Activated naive CD8-positive, alpha-beta T cell treated with anti-CD3 and anti-CD28 coated beads, Interleukin-2, amount 10 ng/mL, durations not matched to agents 7 days and 5 days (primary cell): ENCODE measurements at regions of chr3 and their contacts with region 1.

Region 1: GRCh38 chr3:51682079-51682478 is 11.0 kb downstream of the TEX264 start:
- DNase-seq: peak; percentile 59
- ATAC-seq: peak; percentile 75
- H3K4me3 Mint-ChIP-seq: peak overlapping the region; percentile 74
- H3K27ac Mint-ChIP-seq: peak overlapping the region; percentile 84
- H3K4me1 Mint-ChIP-seq: peaks cover 65% of the 10 kb centered on the region
- H3K27me3 Mint-ChIP-seq: no peaks in the 10 kb centered on the region

Region 2: DNA sequence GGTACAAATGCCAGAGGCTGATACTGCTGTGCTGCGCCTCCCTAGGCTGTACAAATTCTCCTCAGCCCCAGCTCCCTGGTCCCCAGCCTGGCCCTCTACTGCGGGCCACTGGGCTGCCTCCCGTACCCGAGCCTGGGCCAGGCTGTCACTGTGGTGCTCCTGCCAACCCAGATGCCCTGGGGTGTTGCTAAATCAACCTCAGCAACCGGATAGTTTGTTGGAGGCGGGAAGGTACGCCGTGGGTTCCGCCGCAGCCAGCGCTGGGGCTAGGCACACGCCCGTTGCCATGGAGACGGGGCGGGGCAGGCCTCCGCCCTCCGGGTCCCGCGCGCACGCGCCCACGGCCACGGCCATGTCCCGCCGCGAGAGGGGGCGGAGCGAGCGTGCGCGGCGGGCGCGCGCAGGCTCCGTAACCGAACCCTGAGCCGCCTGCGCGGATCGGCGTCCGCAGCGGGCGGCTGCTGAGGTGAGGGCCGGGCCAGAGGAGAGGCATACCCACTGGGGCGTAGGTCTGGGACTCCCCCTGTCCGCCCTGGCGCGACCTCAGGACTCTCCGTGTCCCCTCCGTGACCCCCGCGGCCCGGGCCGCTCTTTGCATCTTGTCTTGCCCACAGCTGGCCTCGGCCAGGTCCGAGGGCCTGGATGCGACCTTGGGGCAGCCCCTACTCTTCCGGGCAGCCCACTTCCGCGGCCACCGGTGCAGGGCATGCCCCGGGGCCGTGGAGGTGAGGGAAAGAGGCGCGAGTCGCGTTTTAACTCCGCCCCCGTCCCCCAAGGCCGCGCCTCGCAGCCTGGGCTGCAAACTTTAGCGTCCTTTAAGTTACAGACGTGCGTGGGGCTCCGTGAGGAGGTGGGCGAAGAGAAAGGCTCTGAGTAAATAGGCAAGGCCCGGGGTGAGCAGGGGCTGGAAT is 11.0 kb before region 1 on chr3 and contains the start of gene TEX264:
- POLR2A ChIA-PET with region 1: interaction called, 80 read pairs
- DNase-seq: peak; percentile 98
- ATAC-seq: peak; percentile 78
- H3K4me3 Mint-ChIP-seq: peak within 1 kb of the TSS; percentile 90
- H3K27ac Mint-ChIP-seq: peak within 1 kb of the TSS; percentile 90
- H3K4me1 Mint-ChIP-seq: peaks cover 55% of the 10 kb centered on the region
- H3K27me3 Mint-ChIP-seq: no peaks in the 10 kb centered on the region
- total RNA-seq, gene TEX264: 49.3 to 49.8 TPM

Region 3: DNA sequence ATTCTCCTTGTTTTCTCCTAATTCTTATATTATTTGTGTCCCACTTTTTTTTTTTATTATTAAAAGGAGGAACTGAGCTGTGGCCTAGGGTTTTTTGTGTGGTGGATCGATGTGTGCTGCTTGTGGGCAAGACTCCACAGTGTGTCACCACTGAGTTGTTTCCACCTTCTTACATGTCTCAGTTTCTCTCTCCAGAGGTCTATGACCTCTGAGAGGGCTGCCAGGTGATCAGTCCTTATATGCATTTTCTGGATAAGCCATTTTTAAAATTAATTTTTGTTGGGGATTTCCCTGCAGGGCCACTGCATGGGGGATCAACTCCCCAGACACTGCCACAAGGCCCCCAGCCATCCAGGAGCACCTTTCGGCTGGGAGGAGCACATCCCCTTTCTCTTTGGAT is 69.2 kb after region 1 on chr3:
- POLR2A ChIA-PET with region 1: no interaction called
- DNase-seq: no peak
- ATAC-seq: no peak
- H3K4me3 Mint-ChIP-seq: no peak overlapping the region
- H3K27ac Mint-ChIP-seq: no peak overlapping the region
- H3K4me1 Mint-ChIP-seq: peaks cover 9% of the 10 kb centered on the region
- H3K27me3 Mint-ChIP-seq: peaks cover 3% of the 10 kb centered on the region